ENCODE measurements at regions of chr15 and their contacts with region 1.

Region 1: GRCh38 chr15:81265944-81266775 is 57.8 kb downstream of the STARD5 start:
- DNase-seq: peak; percentile 70 to 93
- H3K4me3 ChIP-seq: peak overlapping the region in 3 of 4 experiments; percentile 7 to 51 (median 16); a peak in 3 of 8 replicates
- H3K27ac ChIP-seq: no peak overlapping the region
- H3K4me1 ChIP-seq: peaks cover 0 to 5% (median 1%) of the 10 kb centered on the region in 4 experiments; a peak in 2 of 7 replicates
- H3K27me3 ChIP-seq: peaks cover 0 to 2% (median 0%) of the 10 kb centered on the region in 4 experiments; a peak in 2 of 7 replicates
- CTCF ChIP-seq: peak; percentile 92 to 98 (median 94)
- EP300 ChIP-seq: no peak
- POLR2A ChIP-seq: no peak
- RAD21 ChIP-seq: peak; percentile 94 to 95

Region 2: GRCh38 chr15:80989518-80990478 is 276.4 kb before region 1 on chr15 and contains the start of gene MESD:
- CTCF ChIA-PET with region 1: interaction called, 15 read pairs
- POLR2A ChIA-PET with region 1: no interaction called
- DNase-seq: peak; percentile 86 to 98
- H3K4me3 ChIP-seq: peak within 1 kb of the TSS; percentile 74 to 100 (median 94)
- H3K27ac ChIP-seq: peak within 1 kb of the TSS; percentile 98
- H3K4me1 ChIP-seq: peaks cover 0 to 8% (median 2%) of the 10 kb centered on the region in 4 experiments; a peak in 3 of 7 replicates
- H3K27me3 ChIP-seq: no peaks in the 10 kb centered on the region
- CTCF ChIP-seq: no peak
- EP300 ChIP-seq: no peak
- POLR2A ChIP-seq: peak; percentile 97 to 99
- RAD21 ChIP-seq: no peak
- total RNA-seq, gene MESD: 28.3 and 30.2 TPM in 2 replicates

Region 3: DNA sequence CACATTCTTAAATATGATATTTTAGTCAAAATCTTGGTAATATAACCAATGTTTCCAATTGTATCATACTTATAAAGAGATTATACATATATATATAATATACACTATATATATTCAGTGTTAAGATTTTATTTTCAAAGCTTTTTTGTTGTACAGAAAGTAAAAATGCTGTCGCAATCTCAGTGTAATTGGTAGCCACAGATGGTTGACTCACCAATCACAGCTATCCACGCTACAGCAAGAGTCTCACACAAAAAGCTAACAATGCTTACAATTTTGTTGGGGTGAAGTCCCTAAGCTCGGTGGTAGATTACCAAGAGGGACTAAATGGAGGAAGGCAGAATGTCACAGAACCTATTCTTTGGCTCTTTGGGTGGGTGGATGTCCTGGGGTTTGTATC is 149.0 kb before region 1 on chr15:
- CTCF ChIA-PET with region 1: interaction called, 262 read pairs
- POLR2A ChIA-PET with region 1: no interaction called
- DNase-seq: no peak
- H3K4me3 ChIP-seq: no peak overlapping the region
- H3K27ac ChIP-seq: no peak overlapping the region
- H3K4me1 ChIP-seq: peaks cover 1 to 5% (median 3%) of the 10 kb centered on the region in 4 experiments; a peak in 4 of 7 replicates
- H3K27me3 ChIP-seq: peaks cover 0 to 3% (median 0%) of the 10 kb centered on the region in 4 experiments; a peak in 1 of 7 replicates
- CTCF ChIP-seq: no peak
- EP300 ChIP-seq: no peak
- POLR2A ChIP-seq: no peak
- RAD21 ChIP-seq: no peak

Region 4: GRCh38 chr15:81182756-81183438 is 83.3 kb before region 1 on chr15:
- CTCF ChIA-PET with region 1: interaction called, 35 read pairs
- POLR2A ChIA-PET with region 1: no interaction called
- DNase-seq: peak in 1 of 2 experiments; percentile 45
- H3K4me3 ChIP-seq: no peak overlapping the region
- H3K27ac ChIP-seq: no peak overlapping the region
- H3K4me1 ChIP-seq: no peaks in the 10 kb centered on the region
- H3K27me3 ChIP-seq: no peaks in the 10 kb centered on the region; a peak in 1 of 7 replicates
- CTCF ChIP-seq: peak; percentile 20 to 34 (median 29); a peak in 3 of 4 replicates
- EP300 ChIP-seq: no peak
- POLR2A ChIP-seq: no peak
- RAD21 ChIP-seq: peak; percentile 42 to 45

Region 5: DNA sequence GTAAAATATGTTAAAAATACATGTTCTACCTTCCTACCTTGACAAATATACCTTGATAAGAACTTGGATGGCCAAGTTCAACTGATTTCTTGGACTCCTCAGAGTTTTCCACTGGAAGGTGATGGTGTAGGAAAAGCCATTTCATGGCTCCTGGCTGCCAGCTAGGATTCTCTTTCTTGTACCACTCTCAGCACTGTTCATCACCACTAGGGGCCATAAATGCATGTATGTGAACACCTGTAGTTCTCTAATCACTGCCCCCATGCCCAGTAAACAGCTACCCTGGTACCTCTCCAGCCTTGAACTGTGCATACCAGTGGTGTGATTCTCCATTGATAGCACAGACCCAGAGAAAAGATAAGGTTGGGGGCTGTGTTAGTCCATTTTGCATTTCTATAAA is 31.3 kb before region 1 on chr15:
- CTCF ChIA-PET with region 1: interaction called, 14 read pairs
- POLR2A ChIA-PET with region 1: no interaction called
- DNase-seq: no peak
- H3K4me3 ChIP-seq: no peak overlapping the region
- H3K27ac ChIP-seq: no peak overlapping the region
- H3K4me1 ChIP-seq: peaks cover 0 to 3% (median 0%) of the 10 kb centered on the region in 4 experiments; a peak in 1 of 7 replicates
- H3K27me3 ChIP-seq: no peaks in the 10 kb centered on the region
- CTCF ChIP-seq: no peak
- EP300 ChIP-seq: no peak
- POLR2A ChIP-seq: no peak
- RAD21 ChIP-seq: no peak

Region 6: GRCh38 chr15:81357223-81357622 is 91.1 kb after region 1 on chr15:
- CTCF ChIA-PET with region 1: interaction called, 32 read pairs
- POLR2A ChIA-PET with region 1: interaction called, 5 read pairs
- DNase-seq: no peak
- H3K4me3 ChIP-seq: no peak overlapping the region
- H3K27ac ChIP-seq: no peak overlapping the region
- H3K4me1 ChIP-seq: peaks cover 0 to 4% (median 2%) of the 10 kb centered on the region in 4 experiments; a peak in 2 of 7 replicates
- H3K27me3 ChIP-seq: no peaks in the 10 kb centered on the region
- CTCF ChIP-seq: peak in 2 of 3 experiments; percentile 12 to 29; a peak in 1 of 4 replicates
- EP300 ChIP-seq: no peak
- POLR2A ChIP-seq: no peak
- RAD21 ChIP-seq: peak in 1 of 2 experiments; percentile 15; a peak in 1 of 4 replicates

Region 7: DNA sequence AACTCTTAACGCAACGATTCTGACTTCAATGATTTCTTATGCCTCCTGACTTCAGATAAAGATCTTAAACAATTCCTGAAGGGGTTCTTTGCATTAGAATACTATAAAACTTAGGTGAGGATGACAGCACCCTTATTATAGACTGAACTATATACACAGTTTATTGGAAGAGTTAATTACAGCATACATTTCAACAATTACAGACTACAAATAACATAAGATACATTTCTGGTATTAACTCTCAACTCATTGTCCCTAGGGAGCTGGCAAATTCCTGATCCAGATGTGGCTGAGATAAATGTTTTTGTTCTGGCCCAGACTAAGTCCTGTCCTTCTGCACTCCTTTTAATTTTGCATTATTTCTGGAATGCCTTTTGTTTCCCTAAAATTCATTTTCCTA is 263.3 kb after region 1 on chr15:
- CTCF ChIA-PET with region 1: no interaction called
- POLR2A ChIA-PET with region 1: no interaction called
- DNase-seq: no peak
- H3K4me3 ChIP-seq: no peak overlapping the region
- H3K27ac ChIP-seq: no peak overlapping the region
- H3K4me1 ChIP-seq: peaks cover 4 to 12% (median 11%) of the 10 kb centered on the region in 4 experiments
- H3K27me3 ChIP-seq: no peaks in the 10 kb centered on the region
- CTCF ChIP-seq: no peak
- EP300 ChIP-seq: no peak
- POLR2A ChIP-seq: no peak
- RAD21 ChIP-seq: no peak

Measured in H1 (cell line).